WTC11 (cell line): ENCODE measurements at regions of chr1 and their contacts with region 1.

Region 1: GRCh38 chr1:179447489-179447888 is 81.7 kb downstream of the AXDND1 start:
- DNase-seq: peak; percentile 30
- ATAC-seq: peak; percentile 77
- H3K4me3 Mint-ChIP-seq: no peak overlapping the region
- H3K27ac Mint-ChIP-seq: no peak overlapping the region
- H3K4me1 Mint-ChIP-seq: no peaks in the 10 kb centered on the region
- H3K27me3 Mint-ChIP-seq: no peaks in the 10 kb centered on the region; the same call in 1 of the 2 replicates
- CTCF ChIP-seq: no peak

Region 2: DNA sequence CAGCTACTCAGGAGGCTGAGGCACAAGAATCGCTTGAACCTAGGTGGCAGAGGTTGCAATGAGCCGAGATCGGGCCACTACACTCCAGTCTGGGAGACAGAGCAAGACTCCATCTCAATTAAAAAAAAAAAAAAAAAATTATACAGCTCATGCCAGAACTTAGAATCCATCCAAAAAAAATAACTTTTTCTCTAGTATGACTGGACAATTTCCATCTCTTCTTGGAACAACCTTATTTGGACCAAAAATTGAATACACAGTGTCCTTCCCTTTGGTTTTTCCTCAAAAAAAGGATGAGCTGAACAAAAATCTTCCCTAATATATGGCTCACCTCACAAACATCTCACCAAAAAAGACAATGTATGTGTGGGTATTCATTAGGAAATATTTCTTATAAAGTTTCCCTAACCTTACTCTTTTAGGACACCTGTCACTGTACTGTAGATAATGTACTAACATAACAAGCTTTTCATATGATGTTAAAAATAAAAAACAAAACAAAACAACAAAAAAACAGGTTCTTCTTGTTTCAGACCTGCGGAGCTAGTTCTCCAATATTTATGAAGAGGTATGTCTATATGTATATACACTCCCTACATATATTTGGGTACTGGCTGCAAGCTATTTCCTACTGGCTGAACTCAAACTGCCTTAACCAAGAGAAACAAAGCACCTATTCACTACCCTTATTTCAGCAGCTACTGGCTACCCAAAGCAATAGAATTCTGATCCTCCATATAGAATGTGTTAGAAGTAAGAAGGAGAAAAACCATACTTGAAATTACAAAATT is 291.7 kb before region 1 on chr1:
- CTCF ChIA-PET with region 1: no interaction called
- POLR2A ChIA-PET with region 1: no interaction called
- DNase-seq: no peak
- ATAC-seq: no peak
- H3K4me3 Mint-ChIP-seq: no peak overlapping the region
- H3K27ac Mint-ChIP-seq: no peak overlapping the region
- H3K4me1 Mint-ChIP-seq: no peaks in the 10 kb centered on the region
- H3K27me3 Mint-ChIP-seq: no peaks in the 10 kb centered on the region
- CTCF ChIP-seq: no peak

Region 3: GRCh38 chr1:179251675-179252074 is 195.8 kb before region 1 on chr1:
- CTCF ChIA-PET with region 1: interaction called, 14 read pairs
- POLR2A ChIA-PET with region 1: no interaction called
- DNase-seq: no peak
- ATAC-seq: peak; percentile 50; the same call in 1 of the 2 replicates
- H3K4me3 Mint-ChIP-seq: no peak overlapping the region
- H3K27ac Mint-ChIP-seq: no peak overlapping the region
- H3K4me1 Mint-ChIP-seq: no peaks in the 10 kb centered on the region
- H3K27me3 Mint-ChIP-seq: no peaks in the 10 kb centered on the region
- CTCF ChIP-seq: no peak

Region 4: GRCh38 chr1:179384027-179384426 is 63.5 kb before region 1 on chr1:
- CTCF ChIA-PET with region 1: no interaction called
- POLR2A ChIA-PET with region 1: no interaction called
- DNase-seq: no peak
- ATAC-seq: no peak
- H3K4me3 Mint-ChIP-seq: no peak overlapping the region
- H3K27ac Mint-ChIP-seq: no peak overlapping the region
- H3K4me1 Mint-ChIP-seq: no peaks in the 10 kb centered on the region
- H3K27me3 Mint-ChIP-seq: no peaks in the 10 kb centered on the region
- CTCF ChIP-seq: no peak

Region 5: DNA sequence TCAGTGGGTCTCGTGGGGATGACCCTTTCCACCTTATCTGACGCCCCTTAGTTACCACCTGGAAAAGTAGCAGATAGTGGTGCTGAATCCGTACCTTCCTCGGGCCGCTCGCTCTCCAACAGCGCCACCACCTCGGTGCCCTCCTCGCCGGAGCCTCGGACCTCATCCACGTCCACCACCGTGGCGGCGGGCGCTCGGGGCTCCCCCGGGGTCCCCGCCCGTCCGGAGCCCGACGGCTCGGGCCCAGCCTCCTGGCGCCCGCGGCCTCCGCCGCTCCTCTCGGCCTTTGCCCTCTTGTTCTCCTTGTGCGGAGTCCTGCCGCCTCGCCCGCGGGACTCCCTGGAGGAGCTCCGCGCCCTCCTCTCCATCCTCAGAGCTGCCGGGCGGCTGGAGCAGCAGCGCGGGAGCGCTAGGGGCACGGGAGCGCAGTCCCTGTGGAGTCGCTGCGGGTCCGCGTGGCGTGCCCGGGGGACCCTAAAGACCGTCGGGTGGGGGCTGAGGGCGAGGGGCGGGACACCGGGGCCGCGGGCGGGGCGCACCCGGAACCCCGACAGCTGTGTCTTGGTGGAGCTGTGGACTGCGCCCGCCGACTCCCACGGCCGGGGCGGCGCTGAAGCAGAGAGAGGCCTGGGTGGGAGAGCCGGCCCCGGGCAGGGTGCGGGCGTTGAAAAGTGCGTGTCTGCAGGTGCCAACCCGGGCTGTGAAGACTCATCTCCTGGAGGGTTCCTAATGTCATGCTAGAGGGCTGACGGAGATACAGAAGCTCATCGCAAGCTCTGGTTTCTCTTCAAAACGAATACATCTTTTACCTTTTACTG is 128.2 kb after region 1 on chr1 and contains the start of gene NPHS2:
- CTCF ChIA-PET with region 1: interaction called, 14 read pairs
- POLR2A ChIA-PET with region 1: no interaction called
- DNase-seq: peak; percentile 48
- ATAC-seq: peak; percentile 88
- H3K4me3 Mint-ChIP-seq: peak within 1 kb of the TSS; percentile 67
- H3K27ac Mint-ChIP-seq: no peak within 1 kb of the TSS
- H3K4me1 Mint-ChIP-seq: peaks cover 8% of the 10 kb centered on the region
- H3K27me3 Mint-ChIP-seq: peaks cover 58% of the 10 kb centered on the region
- CTCF ChIP-seq: no peak
- total RNA-seq, gene NPHS2: not detected in 3 replicates

Region 6: GRCh38 chr1:179586107-179586823 is 138.8 kb after region 1 on chr1:
- CTCF ChIA-PET with region 1: interaction called, 17 read pairs
- POLR2A ChIA-PET with region 1: no interaction called
- DNase-seq: peak; percentile 76
- ATAC-seq: peak; percentile 88
- H3K4me3 Mint-ChIP-seq: peak overlapping the region; percentile 57
- H3K27ac Mint-ChIP-seq: no peak overlapping the region
- H3K4me1 Mint-ChIP-seq: peaks cover 28% of the 10 kb centered on the region
- H3K27me3 Mint-ChIP-seq: peaks cover 76% of the 10 kb centered on the region
- CTCF ChIP-seq: peak; percentile 61